ENCODE measurements at regions of chr4 and their contacts with region 1.

Region 1: DNA sequence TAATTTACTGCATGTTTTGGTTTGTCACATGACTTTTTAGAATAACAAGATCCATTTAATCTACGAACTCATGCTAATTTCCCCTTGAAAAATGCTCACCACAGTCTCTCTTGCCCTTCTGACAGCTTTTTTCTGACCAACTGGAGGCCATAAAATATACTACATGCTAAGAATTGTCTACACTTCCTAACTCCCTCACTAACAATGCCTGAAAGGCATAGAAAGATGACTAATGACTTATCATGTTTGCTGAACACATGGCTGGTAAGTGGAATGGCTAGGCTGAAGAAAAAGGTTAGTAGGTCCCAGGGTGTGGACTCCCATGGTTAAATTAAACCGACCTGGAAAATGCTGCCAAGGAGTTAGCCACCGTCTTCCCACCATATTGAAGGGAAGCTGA is 309.9 kb downstream of the SPOCK3 start:
- DNase-seq: peak; percentile 80
- ATAC-seq: peak; percentile 97
- H3K4me3 ChIP-seq: no peak overlapping the region
- H3K27ac ChIP-seq: peak overlapping the region; percentile 64
- H3K4me1 ChIP-seq: peaks cover 16% of the 10 kb centered on the region
- H3K27me3 ChIP-seq: no peaks in the 10 kb centered on the region
- CTCF ChIP-seq: no peak

Region 2: GRCh38 chr4:167000141-167000852 is 75.9 kb after region 1 on chr4:
- CTCF ChIA-PET with region 1: no interaction called
- POLR2A ChIA-PET with region 1: no interaction called
- intact Hi-C with region 1: loop called (anchors 2 kb)
- DNase-seq: peak; percentile 91
- ATAC-seq: peak; percentile 99
- H3K4me3 ChIP-seq: peak overlapping the region; percentile 5; the same call in 1 of the 2 replicates
- H3K27ac ChIP-seq: peak overlapping the region; percentile 88
- H3K4me1 ChIP-seq: peaks cover 23% of the 10 kb centered on the region
- H3K27me3 ChIP-seq: no peaks in the 10 kb centered on the region
- CTCF ChIP-seq: no peak

Measured in PC-3 (cell line).